ENCODE measurements at regions of chr17 and their contacts with region 1.

Region 1: GRCh38 chr17:41864836-41865595 is at the start of gene KLHL11:
- DNase-seq: peak; percentile 89
- H3K4me3 ChIP-seq: peak within 1 kb of the TSS; percentile 68 to 96 (median 75)
- H3K27ac ChIP-seq: peak within 1 kb of the TSS; percentile 50
- H3K4me1 ChIP-seq: peaks cover 7% of the 10 kb centered on the region
- H3K27me3 ChIP-seq: no peaks in the 10 kb centered on the region
- CTCF ChIP-seq: peak in 1 of 2 donors; percentile 4
- total RNA-seq, gene KLHL11: 14.5 to 43.2 TPM

Region 2: DNA sequence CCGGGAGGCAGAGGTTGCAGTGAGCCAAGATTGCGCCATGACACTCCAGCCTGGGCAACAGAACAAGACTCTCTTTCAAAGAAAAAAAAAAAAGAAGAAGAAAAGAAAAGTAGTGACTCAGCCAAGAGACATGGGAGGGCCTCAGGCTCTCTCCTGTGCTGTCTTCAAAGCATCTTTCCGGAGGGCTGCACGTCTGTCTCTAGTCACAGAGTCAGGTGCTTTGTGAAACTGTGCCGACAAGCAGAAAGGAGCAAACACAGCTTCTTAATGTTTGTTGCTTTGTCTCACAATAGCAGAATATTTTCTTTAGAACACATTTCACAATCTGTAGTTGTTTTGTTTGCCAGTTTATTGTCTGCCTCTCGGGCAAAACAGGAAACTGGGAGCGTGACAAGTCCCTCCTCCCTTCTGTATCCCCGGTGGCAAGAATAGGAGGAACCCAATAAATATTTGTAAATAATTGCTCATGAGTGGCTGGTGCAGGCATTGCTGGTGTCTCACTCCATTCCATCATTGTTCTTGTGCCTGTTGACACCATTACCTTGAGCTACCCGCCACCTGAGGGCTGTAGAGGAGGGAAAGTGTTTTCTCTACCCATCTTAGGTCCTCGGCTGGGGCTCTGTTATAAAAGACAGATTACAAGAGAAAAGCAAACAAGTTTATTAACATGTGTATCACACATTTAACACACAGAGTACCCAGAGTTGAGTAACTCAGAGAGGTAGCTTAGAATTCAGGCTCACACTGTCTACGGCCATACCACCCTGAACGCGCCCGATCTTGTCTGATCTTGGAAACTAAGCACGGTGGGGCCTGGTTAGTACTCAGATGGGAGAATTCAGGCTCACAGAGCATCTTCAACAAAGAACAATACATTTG is 147.4 kb before region 1 on chr17:
- CTCF ChIA-PET with region 1: interaction called, 41 read pairs
- dilution Hi-C with region 1: no loop called
- in situ Hi-C with region 1: no loop called
- intact Hi-C with region 1: no loop called
- DNase-seq: peak; percentile 85
- H3K4me3 ChIP-seq: peak overlapping the region in 2 of 3 experiments; percentile 2 to 6
- H3K27ac ChIP-seq: peak overlapping the region; percentile 67
- H3K4me1 ChIP-seq: peaks cover 16% of the 10 kb centered on the region
- H3K27me3 ChIP-seq: no peaks in the 10 kb centered on the region
- CTCF ChIP-seq: no peak

Region 3: GRCh38 chr17:41835800-41836549 is 29.0 kb before region 1 on chr17 and contains the start of gene NT5C3B:
- CTCF ChIA-PET with region 1: no interaction called
- dilution Hi-C with region 1: no loop called
- in situ Hi-C with region 1: no loop called
- intact Hi-C with region 1: loop called (anchors 2 kb)
- DNase-seq: peak; percentile 9
- H3K4me3 ChIP-seq: peak within 1 kb of the TSS; percentile 51 to 94 (median 57)
- H3K27ac ChIP-seq: no peak within 1 kb of the TSS
- H3K4me1 ChIP-seq: peaks cover 6% of the 10 kb centered on the region
- H3K27me3 ChIP-seq: no peaks in the 10 kb centered on the region
- CTCF ChIP-seq: no peak
- total RNA-seq, gene NT5C3B: 40.5 to 55.2 TPM

Region 4: DNA sequence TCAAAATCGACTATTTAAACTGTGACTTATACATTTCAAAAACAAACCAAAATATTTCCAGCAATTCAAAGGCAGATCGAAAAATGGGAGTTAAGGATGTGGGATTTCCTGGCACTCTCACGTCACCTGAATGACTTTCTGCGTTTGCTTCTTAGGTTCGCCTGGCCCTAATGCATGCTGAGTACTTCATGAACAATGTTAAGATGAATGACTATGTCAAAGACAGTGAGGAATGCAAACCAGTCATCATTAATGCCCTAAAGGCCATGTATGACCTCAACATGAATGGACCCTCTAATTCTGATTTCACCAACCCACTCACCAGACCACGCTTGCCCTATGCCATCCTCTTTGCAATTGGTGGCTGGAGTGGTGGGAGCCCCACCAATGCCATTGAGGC is 20.0 kb before region 1 on chr17:
- CTCF ChIA-PET with region 1: no interaction called
- dilution Hi-C with region 1: no loop called
- in situ Hi-C with region 1: no loop called
- intact Hi-C with region 1: loop called (anchors 2 kb)
- DNase-seq: no peak
- H3K4me3 ChIP-seq: no peak overlapping the region
- H3K27ac ChIP-seq: no peak overlapping the region
- H3K4me1 ChIP-seq: no peaks in the 10 kb centered on the region
- H3K27me3 ChIP-seq: no peaks in the 10 kb centered on the region
- CTCF ChIP-seq: no peak

Region 5: GRCh38 chr17:41910701-41911391 is 45.8 kb after region 1 on chr17:
- CTCF ChIA-PET with region 1: no interaction called
- dilution Hi-C with region 1: no loop called
- in situ Hi-C with region 1: no loop called
- intact Hi-C with region 1: no loop called
- DNase-seq: peak; percentile 19
- H3K4me3 ChIP-seq: no peak overlapping the region
- H3K27ac ChIP-seq: no peak overlapping the region
- H3K4me1 ChIP-seq: peaks cover 15% of the 10 kb centered on the region
- H3K27me3 ChIP-seq: no peaks in the 10 kb centered on the region
- CTCF ChIP-seq: no peak

Region 6: DNA sequence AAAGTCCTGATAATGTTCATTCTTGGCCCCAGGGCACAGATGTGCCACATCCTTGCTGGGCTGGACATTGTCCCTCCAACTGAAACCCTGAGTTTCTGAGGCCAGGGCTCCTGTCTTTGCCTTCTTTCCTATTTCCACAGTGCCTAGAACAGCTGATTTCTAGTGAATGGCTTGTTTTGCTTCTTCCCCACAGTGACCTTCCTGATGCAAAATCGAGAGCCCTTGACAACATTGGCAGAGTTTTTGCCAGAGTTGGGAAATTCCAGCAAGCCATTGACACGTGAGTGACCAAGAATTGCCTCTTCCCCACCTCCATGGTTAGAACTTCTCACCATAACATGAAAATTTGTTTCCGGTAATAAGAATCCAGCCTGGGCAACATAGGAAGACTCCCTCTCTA is 79.9 kb after region 1 on chr17:
- CTCF ChIA-PET with region 1: no interaction called
- dilution Hi-C with region 1: no loop called
- in situ Hi-C with region 1: no loop called
- intact Hi-C with region 1: no loop called
- DNase-seq: no peak
- H3K4me3 ChIP-seq: no peak overlapping the region
- H3K27ac ChIP-seq: no peak overlapping the region
- H3K4me1 ChIP-seq: no peaks in the 10 kb centered on the region
- H3K27me3 ChIP-seq: no peaks in the 10 kb centered on the region
- CTCF ChIP-seq: no peak

Region 7: DNA sequence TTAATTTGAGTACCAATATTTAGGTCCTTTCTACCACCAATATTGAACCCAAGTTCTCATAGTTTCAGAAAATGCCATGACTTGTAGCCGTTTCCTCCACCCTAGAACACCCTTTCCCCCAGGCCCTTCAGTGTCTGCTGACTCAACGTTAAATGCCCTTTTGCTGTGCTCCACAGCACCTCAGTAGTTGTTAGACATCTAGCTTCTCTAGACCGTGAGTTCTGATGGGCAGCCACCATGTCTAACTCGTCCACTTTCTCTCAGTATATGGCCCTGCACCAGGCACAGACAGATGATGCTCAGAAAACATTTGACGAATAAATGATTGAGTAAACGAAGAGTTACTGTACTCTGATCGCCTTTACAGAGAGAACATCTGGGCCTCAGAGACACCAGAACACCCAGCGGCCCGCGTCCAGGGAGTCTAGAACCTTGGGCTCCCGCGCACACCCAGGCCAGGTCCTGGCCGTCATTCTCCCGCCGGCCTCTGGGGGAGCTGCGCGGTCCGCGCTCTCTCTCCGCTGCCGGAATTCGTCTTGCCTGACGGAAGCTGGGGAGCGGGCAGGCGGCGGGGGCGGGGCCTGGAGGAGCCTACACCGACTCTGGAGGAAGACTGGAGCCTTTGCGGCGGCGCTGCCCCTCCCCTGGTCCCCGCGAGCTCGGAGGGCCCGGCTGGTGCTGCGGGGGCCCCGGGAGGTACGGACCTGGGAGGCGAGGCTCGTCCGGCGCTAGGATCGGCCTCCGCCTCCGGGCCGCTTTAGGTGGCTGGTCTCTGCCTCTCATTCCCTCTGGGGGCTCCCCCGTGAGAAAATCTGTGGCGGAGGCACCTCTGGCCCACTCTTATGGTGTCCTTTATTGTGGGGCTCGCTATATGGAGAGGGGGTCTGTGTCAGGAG is 154.7 kb after region 1 on chr17 and contains the start of gene NKIRAS2:
- CTCF ChIA-PET with region 1: no interaction called
- dilution Hi-C with region 1: no loop called
- in situ Hi-C with region 1: no loop called
- intact Hi-C with region 1: loop called (anchors 10 kb)
- DNase-seq: peak; percentile 87
- H3K4me3 ChIP-seq: peak within 1 kb of the TSS; percentile 79 to 98 (median 90)
- H3K27ac ChIP-seq: peak within 1 kb of the TSS; percentile 66
- H3K4me1 ChIP-seq: peaks cover 31% of the 10 kb centered on the region
- H3K27me3 ChIP-seq: no peaks in the 10 kb centered on the region
- CTCF ChIP-seq: peak; percentile 70 to 87
- total RNA-seq, gene NKIRAS2: 28.1 to 40.2 TPM